ENCODE measurements at regions of chr20 and their contacts with region 1.

Region 1: DNA sequence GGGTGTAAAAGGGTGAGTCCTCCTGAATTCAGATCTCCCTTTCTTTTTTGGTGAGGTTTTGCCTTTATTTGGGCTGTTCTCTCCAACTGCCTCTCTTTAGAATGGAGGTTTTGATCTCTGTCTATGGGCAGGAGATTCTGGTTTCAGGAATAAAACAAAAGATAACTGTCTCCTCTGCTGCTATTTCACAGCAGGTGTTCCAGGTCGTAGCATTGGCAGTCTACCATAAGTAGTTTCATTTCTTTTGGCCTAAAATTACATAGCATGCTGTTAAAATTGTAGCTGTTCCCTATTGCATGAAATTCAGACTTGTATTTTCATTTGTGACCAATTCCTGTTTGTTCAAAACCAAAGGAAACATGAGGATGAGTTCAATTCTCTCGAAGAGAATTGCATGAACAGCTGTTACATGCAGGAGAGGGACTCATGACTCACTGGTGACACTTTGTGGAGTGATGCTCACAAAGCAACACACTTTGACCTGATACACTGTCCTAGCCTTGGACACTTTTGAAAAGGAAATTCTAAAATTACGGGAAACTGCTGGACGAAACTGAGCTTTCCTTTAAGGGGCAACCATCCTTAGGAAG is 76.8 kb upstream of the SIRPG start:
- DNase-seq: peak; percentile 41
- ATAC-seq: peak; percentile 88
- H3K4me3 Mint-ChIP-seq: no peak overlapping the region
- H3K27ac Mint-ChIP-seq: no peak overlapping the region
- H3K4me1 Mint-ChIP-seq: peaks cover 40% of the 10 kb centered on the region
- H3K27me3 Mint-ChIP-seq: no peaks in the 10 kb centered on the region
- CTCF ChIP-seq: peak; percentile 45

Region 2: GRCh38 chr20:1509237-1509636 is 225.1 kb before region 1 on chr20:
- CTCF ChIA-PET with region 1: interaction called, 31 read pairs
- POLR2A ChIA-PET with region 1: interaction called, 3 read pairs
- intact Hi-C with region 1: loop called (anchors 10 kb)
- DNase-seq: peak; percentile 58
- ATAC-seq: peak; percentile 74
- H3K4me3 Mint-ChIP-seq: no peak overlapping the region
- H3K27ac Mint-ChIP-seq: no peak overlapping the region
- H3K4me1 Mint-ChIP-seq: no peaks in the 10 kb centered on the region
- H3K27me3 Mint-ChIP-seq: peaks cover 8% of the 10 kb centered on the region
- CTCF ChIP-seq: peak; percentile 32

Region 3: GRCh38 chr20:1535420-1536175 is 198.8 kb before region 1 on chr20:
- CTCF ChIA-PET with region 1: interaction called, 10 read pairs
- POLR2A ChIA-PET with region 1: no interaction called
- intact Hi-C with region 1: loop called (anchors 10 kb)
- DNase-seq: no peak
- ATAC-seq: no peak
- H3K4me3 Mint-ChIP-seq: no peak overlapping the region
- H3K27ac Mint-ChIP-seq: no peak overlapping the region
- H3K4me1 Mint-ChIP-seq: peaks cover 11% of the 10 kb centered on the region
- H3K27me3 Mint-ChIP-seq: no peaks in the 10 kb centered on the region
- CTCF ChIP-seq: no peak

Region 4: GRCh38 chr20:1555952-1556351 is 178.4 kb before region 1 on chr20:
- CTCF ChIA-PET with region 1: interaction called, 21 read pairs
- POLR2A ChIA-PET with region 1: no interaction called
- intact Hi-C with region 1: no loop called
- DNase-seq: no peak
- ATAC-seq: peak; percentile 61
- H3K4me3 Mint-ChIP-seq: no peak overlapping the region
- H3K27ac Mint-ChIP-seq: no peak overlapping the region
- H3K4me1 Mint-ChIP-seq: peaks cover 7% of the 10 kb centered on the region
- H3K27me3 Mint-ChIP-seq: no peaks in the 10 kb centered on the region
- CTCF ChIP-seq: peak; percentile 41

Region 5: GRCh38 chr20:1663917-1664316 is 70.4 kb before region 1 on chr20:
- CTCF ChIA-PET with region 1: interaction called, 5 read pairs
- POLR2A ChIA-PET with region 1: interaction called, 6 read pairs
- intact Hi-C with region 1: loop called (anchors 5 kb)
- DNase-seq: peak; percentile 45
- ATAC-seq: peak; percentile 40
- H3K4me3 Mint-ChIP-seq: peak overlapping the region; percentile 69
- H3K27ac Mint-ChIP-seq: peak overlapping the region; percentile 96
- H3K4me1 Mint-ChIP-seq: peaks cover 90% of the 10 kb centered on the region
- H3K27me3 Mint-ChIP-seq: no peaks in the 10 kb centered on the region
- CTCF ChIP-seq: no peak

Measured in activated CD8-positive, alpha-beta T cell treated with anti-CD3 and anti-CD28 coated beads for 36 hours (primary cell).